ENCODE measurements at regions of chr2 and their contacts with region 1.

Region 1: GRCh38 chr2:96856776-96857673 is 791 bp downstream of the ANKRD39 start:
- DNase-seq: peak; percentile 59
- ATAC-seq: no peak
- H3K4me3 Mint-ChIP-seq: peak overlapping the region; percentile 84
- H3K27ac Mint-ChIP-seq: peak overlapping the region; percentile 78
- H3K4me1 Mint-ChIP-seq: peaks cover 29% of the 10 kb centered on the region
- H3K27me3 Mint-ChIP-seq: no peaks in the 10 kb centered on the region
- CTCF ChIP-seq: no peak

Region 2: DNA sequence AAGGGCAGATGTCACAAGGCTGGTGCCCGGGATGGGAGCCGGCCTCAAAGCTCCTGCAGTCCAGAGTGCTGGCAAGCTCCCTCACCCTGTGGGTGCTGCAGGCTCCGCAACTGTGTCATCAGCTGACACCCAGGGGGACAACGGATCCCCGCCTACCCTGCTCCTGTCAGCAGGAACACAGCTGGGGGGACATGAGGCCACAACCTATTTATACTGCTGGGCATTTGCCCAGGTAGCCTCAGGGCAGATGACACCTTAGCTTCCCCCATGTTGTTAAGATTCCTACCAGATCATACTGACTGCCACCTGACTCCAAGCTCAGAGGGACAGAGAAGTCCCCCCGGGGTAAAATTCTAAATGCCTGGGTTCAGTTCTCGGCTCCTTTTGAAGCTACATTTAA is 14.4 kb before region 1 on chr2:
- CTCF ChIA-PET with region 1: interaction called, 29 read pairs
- POLR2A ChIA-PET with region 1: interaction called, 20 read pairs
- intact Hi-C with region 1: no loop called
- DNase-seq: no peak
- ATAC-seq: no peak
- H3K4me3 Mint-ChIP-seq: no peak overlapping the region
- H3K27ac Mint-ChIP-seq: no peak overlapping the region
- H3K4me1 Mint-ChIP-seq: peaks cover 18% of the 10 kb centered on the region
- H3K27me3 Mint-ChIP-seq: no peaks in the 10 kb centered on the region
- CTCF ChIP-seq: no peak

Region 3: DNA sequence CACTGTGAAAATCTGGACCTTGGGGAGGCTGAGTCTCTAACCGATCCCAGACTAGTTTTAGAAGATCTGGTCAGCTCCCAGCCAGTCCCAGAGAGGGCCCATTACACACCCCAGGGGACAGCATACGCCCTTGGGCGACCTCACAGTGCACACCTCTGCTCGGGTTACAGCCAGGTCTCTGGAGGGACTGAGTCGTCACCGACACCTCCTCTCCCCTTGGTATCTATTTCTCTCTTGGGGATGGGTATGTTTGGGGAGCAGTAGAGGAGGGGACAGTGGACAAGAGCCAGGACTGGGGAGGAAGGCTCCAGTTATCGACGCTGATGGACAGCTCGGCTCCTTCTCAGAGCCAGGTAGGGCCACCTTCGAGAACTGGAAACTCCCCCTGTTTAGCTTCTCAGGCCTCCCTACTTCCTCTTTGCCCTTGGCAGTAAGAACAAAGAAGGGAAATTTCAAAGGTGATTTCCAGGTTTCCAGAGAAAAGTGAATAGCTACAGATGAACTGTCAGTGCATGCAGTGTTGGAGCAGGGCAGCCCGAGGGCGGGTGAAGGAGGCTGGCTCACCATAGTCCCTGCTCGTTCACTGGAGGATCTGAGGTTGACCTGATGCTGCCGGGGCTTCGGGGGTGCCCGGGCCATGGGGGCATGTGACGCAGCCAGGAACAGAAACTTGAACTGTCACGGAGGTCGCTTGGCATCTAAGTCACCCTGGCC is 17.2 kb after region 1 on chr2:
- CTCF ChIA-PET with region 1: interaction called, 38 read pairs
- POLR2A ChIA-PET with region 1: interaction called, 30 read pairs
- intact Hi-C with region 1: no loop called
- DNase-seq: peak; percentile 53
- ATAC-seq: peak; percentile 46
- H3K4me3 Mint-ChIP-seq: no peak overlapping the region
- H3K27ac Mint-ChIP-seq: peak overlapping the region; percentile 62
- H3K4me1 Mint-ChIP-seq: peaks cover 50% of the 10 kb centered on the region
- H3K27me3 Mint-ChIP-seq: peaks cover 3% of the 10 kb centered on the region
- CTCF ChIP-seq: no peak

Region 4: GRCh38 chr2:96923810-96924774 is 67.1 kb after region 1 on chr2:
- CTCF ChIA-PET with region 1: interaction called, 14 read pairs
- POLR2A ChIA-PET with region 1: interaction called, 5 read pairs
- intact Hi-C with region 1: no loop called
- DNase-seq: peak; percentile 78
- ATAC-seq: peak; percentile 82
- H3K4me3 Mint-ChIP-seq: peak overlapping the region; percentile 76
- H3K27ac Mint-ChIP-seq: peak overlapping the region; percentile 88
- H3K4me1 Mint-ChIP-seq: peaks cover 35% of the 10 kb centered on the region
- H3K27me3 Mint-ChIP-seq: no peaks in the 10 kb centered on the region
- CTCF ChIP-seq: no peak

Region 5: DNA sequence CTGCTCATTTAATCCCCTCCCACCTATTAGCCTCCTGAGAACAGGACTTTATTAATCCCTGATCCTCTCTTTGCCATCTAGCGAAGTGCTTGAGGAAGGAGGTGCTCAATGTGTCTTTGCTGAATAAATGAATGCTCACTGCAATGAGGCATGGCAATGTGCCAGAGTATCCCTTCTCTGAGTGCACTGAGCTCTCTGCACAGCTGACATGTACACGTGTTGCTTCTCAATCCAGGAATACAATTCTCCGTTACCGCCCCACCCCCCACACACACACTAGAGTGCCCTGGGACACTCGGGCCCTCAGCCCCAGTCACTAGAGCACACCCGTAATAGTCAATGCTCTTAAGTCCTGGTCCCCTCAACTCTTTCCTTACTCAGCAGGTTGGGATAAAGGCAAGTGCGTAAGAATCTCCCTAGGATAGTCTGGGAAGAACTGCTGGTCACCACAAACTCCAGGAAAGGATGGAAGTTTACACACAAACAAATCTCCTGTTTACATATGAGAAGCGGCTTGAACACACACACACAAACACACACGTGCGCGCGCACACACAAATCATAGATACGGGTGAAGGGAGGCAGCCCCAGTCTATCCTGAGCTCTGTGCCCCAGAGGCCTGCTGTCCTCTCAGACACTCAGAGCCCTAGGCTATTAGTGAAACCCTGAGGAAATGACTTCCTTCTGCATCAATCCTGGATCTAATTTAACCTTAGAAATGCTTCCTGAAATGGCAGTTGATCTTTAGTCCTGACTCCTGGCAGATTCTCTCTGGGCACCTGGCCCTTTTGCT is 88.2 kb after region 1 on chr2:
- CTCF ChIA-PET with region 1: interaction called, 147 read pairs
- POLR2A ChIA-PET with region 1: interaction called, 6 read pairs
- intact Hi-C with region 1: no loop called
- DNase-seq: no peak
- ATAC-seq: no peak
- H3K4me3 Mint-ChIP-seq: no peak overlapping the region
- H3K27ac Mint-ChIP-seq: no peak overlapping the region
- H3K4me1 Mint-ChIP-seq: peaks cover 18% of the 10 kb centered on the region
- H3K27me3 Mint-ChIP-seq: no peaks in the 10 kb centered on the region
- CTCF ChIP-seq: no peak

Region 6: GRCh38 chr2:96960153-96960961 is 103.3 kb after region 1 on chr2:
- CTCF ChIA-PET with region 1: interaction called, 147 read pairs
- POLR2A ChIA-PET with region 1: interaction called, 10 read pairs
- intact Hi-C with region 1: loop called (anchors 2 kb)
- DNase-seq: peak; percentile 92
- ATAC-seq: peak; percentile 74
- H3K4me3 Mint-ChIP-seq: no peak overlapping the region
- H3K27ac Mint-ChIP-seq: no peak overlapping the region
- H3K4me1 Mint-ChIP-seq: peaks cover 48% of the 10 kb centered on the region
- H3K27me3 Mint-ChIP-seq: no peaks in the 10 kb centered on the region
- CTCF ChIP-seq: peak; percentile 97

Measured in activated CD8-positive, alpha-beta T cell treated with anti-CD3 and anti-CD28 coated beads for 36 hours (primary cell).